Heart right ventricle (tissue), 16 donors: ENCODE measurements at regions of chr6 and their contacts with region 1.

Region 1: DNA sequence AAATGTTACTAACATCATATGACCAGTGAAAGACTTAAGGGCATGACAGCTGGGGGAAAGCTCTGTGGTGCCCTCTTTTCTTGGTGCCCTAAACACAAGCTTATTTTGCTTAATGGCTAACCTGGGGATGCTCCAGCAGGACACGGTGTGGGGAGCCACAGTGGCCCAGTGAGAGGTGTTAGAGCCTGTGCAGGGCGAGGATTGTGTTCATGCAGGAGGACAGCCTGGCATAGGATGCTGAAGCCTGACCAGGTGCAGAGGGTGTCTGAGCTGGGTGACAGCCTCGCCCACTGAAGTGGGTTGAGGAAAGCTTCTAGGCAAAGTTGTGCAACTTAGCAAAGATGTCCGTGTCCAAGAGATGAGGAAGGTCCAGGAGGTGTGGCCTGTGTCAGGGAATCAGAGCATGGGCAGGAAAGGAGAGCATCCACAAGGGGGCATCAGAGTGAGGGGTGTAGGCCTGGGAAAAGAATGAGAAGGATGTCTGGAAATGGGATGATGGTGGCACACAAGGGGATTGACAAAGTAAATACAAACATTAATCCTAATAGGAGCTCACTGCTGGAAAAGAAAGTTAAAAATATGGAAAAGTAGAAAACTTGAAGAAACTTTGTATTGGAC is 33.9 kb downstream of the SLC17A4 start:
- DNase-seq: peak in 1 of 2 donors; percentile 40
- ATAC-seq: peak in 4 of 8 donors; percentile 39 to 55 (median 46)
- H3K4me3 ChIP-seq: no peak overlapping the region
- H3K27ac ChIP-seq: no peak overlapping the region
- H3K4me1 ChIP-seq: no peaks in the 10 kb centered on the region
- H3K27me3 ChIP-seq: no peaks in the 10 kb centered on the region
- CTCF ChIP-seq: peak in 7 of 9 donors; percentile 34 to 59 (median 44)

Region 2: DNA sequence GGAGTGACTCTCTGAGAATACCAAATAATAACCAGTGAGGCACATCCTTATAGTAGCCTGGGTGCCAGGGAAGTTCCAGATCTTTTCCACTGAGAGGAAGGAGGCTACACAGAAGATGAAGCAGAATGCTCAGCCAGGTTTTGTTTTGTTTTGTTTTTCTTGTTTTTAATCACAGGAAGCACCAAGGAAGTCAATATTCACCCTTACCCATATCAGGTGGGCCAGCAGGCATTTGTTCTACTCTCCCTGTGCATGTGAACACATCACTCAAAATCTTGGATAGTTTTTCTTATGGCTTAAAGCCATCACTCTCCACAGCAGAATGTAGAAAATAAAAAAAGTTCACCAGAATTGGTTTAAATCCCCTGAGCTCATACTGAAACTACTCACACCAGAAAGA is 32.9 kb after region 1 on chr6:
- intact Hi-C with region 1: no loop called
- DNase-seq: no peak
- ATAC-seq: no peak
- H3K4me3 ChIP-seq: no peak overlapping the region
- H3K27ac ChIP-seq: no peak overlapping the region
- H3K4me1 ChIP-seq: no peaks in the 10 kb centered on the region
- H3K27me3 ChIP-seq: peaks cover 0 to 4% (median 0%) of the 10 kb centered on the region in 7 donors
- CTCF ChIP-seq: no peak

Region 3: GRCh38 chr6:25889877-25890853 is 101.8 kb after region 1 on chr6:
- intact Hi-C with region 1: loop called in 2 of 10 experiments (anchors 5 to 10 kb)
- DNase-seq: peak in 1 of 2 donors; percentile 26
- ATAC-seq: peak in 4 of 8 donors; percentile 28 to 69 (median 56)
- H3K4me3 ChIP-seq: no peak overlapping the region
- H3K27ac ChIP-seq: no peak overlapping the region
- H3K4me1 ChIP-seq: no peaks in the 10 kb centered on the region
- H3K27me3 ChIP-seq: peaks cover 0 to 2% (median 0%) of the 10 kb centered on the region in 7 donors
- CTCF ChIP-seq: peak in 8 of 9 donors; percentile 14 to 67 (median 48)

Region 4: GRCh38 chr6:25930532-25931410 is 142.4 kb after region 1 on chr6 and contains the start of gene SLC17A2:
- intact Hi-C with region 1: no loop called
- DNase-seq: no peak
- ATAC-seq: no peak
- H3K4me3 ChIP-seq: no peak within 1 kb of the TSS
- H3K27ac ChIP-seq: no peak within 1 kb of the TSS
- H3K4me1 ChIP-seq: peaks cover 0 to 13% (median 0%) of the 10 kb centered on the region in 9 donors
- H3K27me3 ChIP-seq: peaks cover 0 to under 1% (median 0%) of the 10 kb centered on the region in 7 donors
- CTCF ChIP-seq: no peak
- total RNA-seq, gene SLC17A2: not detected

Region 5: DNA sequence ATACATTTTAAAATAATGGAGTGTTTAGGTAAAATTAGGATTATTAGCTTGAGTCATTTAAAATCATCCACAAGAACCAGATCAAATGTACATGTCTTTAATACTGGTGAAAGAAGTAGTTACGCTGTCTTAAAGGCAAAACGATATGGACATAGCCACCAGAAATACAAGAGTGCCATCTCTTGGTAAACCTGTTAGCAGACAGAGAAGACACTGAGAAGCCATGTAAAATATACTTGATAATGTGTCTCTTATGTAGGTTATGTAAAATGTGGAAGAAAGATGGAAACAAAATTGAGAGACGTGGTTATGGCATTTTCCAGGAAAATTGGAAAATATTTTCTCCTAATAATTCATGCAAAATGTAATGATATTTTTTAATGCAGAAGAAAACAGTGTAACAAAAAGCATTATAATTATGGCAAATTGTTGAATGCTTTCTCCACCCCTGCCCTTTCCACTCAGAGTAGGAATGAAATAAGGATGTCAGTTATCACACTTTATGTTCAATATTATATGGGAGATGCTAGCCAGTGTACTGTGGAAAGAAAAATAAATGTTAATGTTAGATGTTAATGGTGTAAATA is 154.2 kb after region 1 on chr6:
- intact Hi-C with region 1: loop called in 1 of 10 experiments (anchors 5 kb)
- DNase-seq: no peak
- ATAC-seq: peak in 1 of 8 donors; percentile 58
- H3K4me3 ChIP-seq: no peak overlapping the region
- H3K27ac ChIP-seq: no peak overlapping the region
- H3K4me1 ChIP-seq: no peaks in the 10 kb centered on the region
- H3K27me3 ChIP-seq: no peaks in the 10 kb centered on the region
- CTCF ChIP-seq: peak in 7 of 9 donors; percentile 31 to 66 (median 59)

Region 6: DNA sequence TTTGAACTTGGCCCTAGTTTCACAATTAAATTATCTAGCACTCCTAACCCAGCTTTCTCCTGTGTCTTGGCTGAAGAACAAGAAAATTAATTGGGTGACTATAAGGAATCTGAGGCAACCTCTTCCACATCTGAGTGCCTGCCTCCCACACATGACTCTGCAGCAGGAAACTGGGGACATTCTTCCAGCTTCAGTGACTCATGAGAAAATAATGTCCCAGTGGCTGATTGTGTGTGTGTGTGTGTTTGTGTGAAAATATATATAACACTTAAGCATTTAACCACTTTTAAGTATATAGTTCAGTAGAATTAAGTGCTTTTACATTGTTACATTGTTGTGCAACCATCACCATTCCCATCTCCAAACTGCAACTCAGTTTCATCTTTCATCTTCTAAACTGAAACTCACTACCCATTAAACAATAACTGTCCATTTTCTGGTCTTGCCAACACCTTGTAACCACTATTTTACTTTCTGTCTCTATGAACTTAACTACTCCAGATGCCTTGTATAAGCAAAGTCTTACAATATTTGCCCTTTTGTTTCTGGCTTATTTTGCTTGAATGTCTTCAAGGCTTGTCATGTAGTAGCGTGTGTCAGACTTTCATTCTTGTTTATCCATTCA is 182.9 kb after region 1 on chr6:
- intact Hi-C with region 1: no loop called
- DNase-seq: peak in 1 of 2 donors; percentile 47
- ATAC-seq: peak in 6 of 8 donors; percentile 52 to 91 (median 86)
- H3K4me3 ChIP-seq: no peak overlapping the region
- H3K27ac ChIP-seq: peak overlapping the region in 6 of 10 donors; percentile 25 to 60 (median 38)
- H3K4me1 ChIP-seq: peaks cover 0 to 61% (median 46%) of the 10 kb centered on the region in 9 donors
- H3K27me3 ChIP-seq: no peaks in the 10 kb centered on the region
- CTCF ChIP-seq: no peak

Region 7: GRCh38 chr6:25992413-25993037 is 204.1 kb after region 1 on chr6:
- intact Hi-C with region 1: loop called in 1 of 10 experiments (anchors 5 kb)
- DNase-seq: peak; percentile 95 to 98
- ATAC-seq: peak; percentile 96 to 100 (median 98)
- H3K4me3 ChIP-seq: peak overlapping the region; percentile 37 to 74 (median 60)
- H3K27ac ChIP-seq: peak overlapping the region; percentile 76 to 96 (median 88)
- H3K4me1 ChIP-seq: peaks cover 0 to 19% (median 15%) of the 10 kb centered on the region in 9 donors
- H3K27me3 ChIP-seq: no peaks in the 10 kb centered on the region
- CTCF ChIP-seq: peak; percentile 95 to 100 (median 100)

Region 8: DNA sequence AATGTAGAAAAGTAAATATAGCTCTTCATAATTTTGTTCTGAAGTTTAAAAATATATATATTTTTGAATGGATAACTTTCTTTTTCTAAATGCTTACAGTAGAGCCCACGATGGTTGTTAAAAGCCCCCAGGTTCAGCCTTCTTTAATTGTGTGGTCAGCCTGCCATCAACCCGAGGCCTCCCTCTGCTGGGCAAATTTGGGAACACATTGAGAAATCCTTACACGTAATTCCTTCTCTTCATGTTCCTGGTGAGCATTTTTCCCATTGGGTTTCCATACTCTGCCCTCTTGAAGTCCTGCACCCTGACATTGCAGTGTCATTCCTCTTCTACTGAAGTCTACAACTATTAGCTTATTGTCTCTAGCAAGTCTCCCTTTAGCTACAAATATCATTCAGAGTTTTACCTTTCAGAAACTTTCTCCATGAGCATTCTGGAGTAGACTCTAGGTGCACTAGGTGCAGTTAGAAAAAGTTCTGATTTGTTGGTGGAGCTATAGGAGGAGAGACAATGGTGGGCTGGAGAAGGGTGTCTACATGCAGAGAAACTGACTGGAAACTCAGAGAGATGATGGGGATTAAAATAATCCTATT is 214.8 kb after region 1 on chr6:
- intact Hi-C with region 1: loop called in 4 of 10 experiments (anchors 5 kb)
- DNase-seq: peak; percentile 17 to 73
- ATAC-seq: peak in 7 of 8 donors; percentile 33 to 70 (median 61)
- H3K4me3 ChIP-seq: no peak overlapping the region
- H3K27ac ChIP-seq: no peak overlapping the region
- H3K4me1 ChIP-seq: peaks cover 0 to 10% (median 0%) of the 10 kb centered on the region in 9 donors
- H3K27me3 ChIP-seq: no peaks in the 10 kb centered on the region
- CTCF ChIP-seq: peak; percentile 66 to 89 (median 82)